ENCODE measurements at regions of chr6 and their contacts with region 1.

Region 1: DNA sequence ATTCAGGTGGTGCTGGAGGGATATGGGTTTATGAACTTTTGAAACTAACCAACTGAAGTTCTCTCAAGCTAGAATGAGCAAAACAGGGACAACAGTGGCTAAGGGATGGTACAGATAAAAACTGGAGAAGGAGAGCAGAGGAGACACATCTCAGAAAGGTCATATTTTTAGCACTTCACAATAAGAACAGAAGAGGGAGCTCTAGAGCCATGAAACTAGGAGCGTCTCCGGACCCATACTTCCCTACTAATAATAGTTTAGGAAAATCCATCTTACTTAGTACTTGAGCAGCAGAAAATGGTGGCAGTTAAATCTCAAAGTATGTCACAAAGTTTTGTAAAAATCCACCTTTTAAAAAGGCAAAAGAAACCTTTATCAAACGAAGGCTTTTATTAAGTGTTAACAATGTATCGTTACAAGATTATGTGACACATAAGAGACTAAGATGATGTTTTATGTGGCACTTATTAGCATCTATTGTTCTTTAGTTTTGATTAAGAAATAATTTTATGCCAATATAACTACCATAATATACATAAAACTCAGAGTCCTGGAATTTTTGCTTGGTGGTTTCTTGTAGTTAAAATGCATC is 278.6 kb downstream of the TBC1D32 start:
- DNase-seq: peak; percentile 60
- H3K4me3 Mint-ChIP-seq: no peak overlapping the region
- H3K27ac Mint-ChIP-seq: no peak overlapping the region
- H3K4me1 Mint-ChIP-seq: no peaks in the 10 kb centered on the region
- H3K27me3 Mint-ChIP-seq: peaks cover 2% of the 10 kb centered on the region

Region 2: GRCh38 chr6:121236984-121237383 is 181.3 kb after region 1 on chr6:
- intact Hi-C with region 1: loop called (anchors 5 kb)
- DNase-seq: no peak
- H3K4me3 Mint-ChIP-seq: no peak overlapping the region
- H3K27ac Mint-ChIP-seq: no peak overlapping the region
- H3K4me1 Mint-ChIP-seq: peaks cover 2% of the 10 kb centered on the region
- H3K27me3 Mint-ChIP-seq: no peaks in the 10 kb centered on the region

Region 3: GRCh38 chr6:121305957-121306607 is 250.4 kb after region 1 on chr6:
- intact Hi-C with region 1: loop called (anchors 1 kb)
- DNase-seq: no peak
- H3K4me3 Mint-ChIP-seq: no peak overlapping the region
- H3K27ac Mint-ChIP-seq: no peak overlapping the region
- H3K4me1 Mint-ChIP-seq: peaks cover 4% of the 10 kb centered on the region
- H3K27me3 Mint-ChIP-seq: no peaks in the 10 kb centered on the region

Region 4: DNA sequence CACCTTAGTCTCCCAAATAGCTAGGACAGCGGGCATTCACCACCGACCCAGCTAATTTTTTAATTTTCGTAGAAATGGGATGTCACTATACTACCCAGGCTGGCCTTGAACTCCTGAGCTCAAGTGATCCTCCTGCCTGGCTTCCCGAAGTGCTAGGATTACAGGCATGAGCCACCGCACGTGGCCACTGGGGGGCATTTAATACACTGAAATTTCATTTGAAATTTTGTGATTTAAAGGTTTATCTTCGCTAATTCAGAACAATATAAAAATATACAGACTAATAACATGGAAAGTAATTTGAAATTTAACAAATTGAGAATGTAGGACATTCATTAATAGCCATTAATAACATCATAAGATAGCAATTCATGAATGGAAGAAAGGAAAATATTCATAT is 299.1 kb after region 1 on chr6:
- intact Hi-C with region 1: loop called (anchors 5 kb)
- DNase-seq: no peak
- H3K4me3 Mint-ChIP-seq: no peak overlapping the region
- H3K27ac Mint-ChIP-seq: no peak overlapping the region
- H3K4me1 Mint-ChIP-seq: no peaks in the 10 kb centered on the region
- H3K27me3 Mint-ChIP-seq: peaks cover 21% of the 10 kb centered on the region

Region 5: DNA sequence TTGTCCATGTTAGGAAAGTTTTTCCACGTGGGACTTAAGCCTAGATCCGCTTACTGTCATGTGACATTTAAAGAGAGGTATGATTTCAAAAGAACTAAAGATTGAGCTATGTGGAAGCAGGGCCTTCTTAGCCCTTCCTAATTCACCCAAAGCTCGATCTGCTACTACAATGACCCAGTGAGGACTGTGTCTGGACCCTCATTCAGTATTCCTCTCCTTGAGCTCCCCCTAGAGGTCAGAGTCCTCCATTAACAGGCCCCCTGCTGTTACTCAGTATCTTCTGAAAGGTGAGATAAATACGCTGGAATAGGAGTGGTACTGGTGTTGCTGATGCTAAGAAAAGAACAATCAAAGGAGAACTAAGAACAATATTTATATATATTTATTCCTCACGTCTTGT is 793.8 kb after region 1 on chr6:
- intact Hi-C with region 1: loop called (anchors 5 kb)
- DNase-seq: peak; percentile 77
- H3K4me3 Mint-ChIP-seq: no peak overlapping the region
- H3K27ac Mint-ChIP-seq: no peak overlapping the region
- H3K4me1 Mint-ChIP-seq: no peaks in the 10 kb centered on the region
- H3K27me3 Mint-ChIP-seq: no peaks in the 10 kb centered on the region

Region 6: GRCh38 chr6:122033539-122034181 is 978.0 kb after region 1 on chr6:
- intact Hi-C with region 1: loop called (anchors 1 kb)
- DNase-seq: no peak
- H3K4me3 Mint-ChIP-seq: no peak overlapping the region
- H3K27ac Mint-ChIP-seq: no peak overlapping the region
- H3K4me1 Mint-ChIP-seq: peaks cover 3% of the 10 kb centered on the region
- H3K27me3 Mint-ChIP-seq: no peaks in the 10 kb centered on the region

Measured in activated CD4-positive, alpha-beta T cell treated with anti-CD3 and anti-CD28 coated beads, Interleukin-2, amount 10 ng/mL, durations not matched to agents 24 days and 14 days (primary cell).